Naive thymus-derived CD4-positive, alpha-beta T cell (primary cell): ENCODE measurements at regions of chr7 and their contacts with region 1.

Region 1: DNA sequence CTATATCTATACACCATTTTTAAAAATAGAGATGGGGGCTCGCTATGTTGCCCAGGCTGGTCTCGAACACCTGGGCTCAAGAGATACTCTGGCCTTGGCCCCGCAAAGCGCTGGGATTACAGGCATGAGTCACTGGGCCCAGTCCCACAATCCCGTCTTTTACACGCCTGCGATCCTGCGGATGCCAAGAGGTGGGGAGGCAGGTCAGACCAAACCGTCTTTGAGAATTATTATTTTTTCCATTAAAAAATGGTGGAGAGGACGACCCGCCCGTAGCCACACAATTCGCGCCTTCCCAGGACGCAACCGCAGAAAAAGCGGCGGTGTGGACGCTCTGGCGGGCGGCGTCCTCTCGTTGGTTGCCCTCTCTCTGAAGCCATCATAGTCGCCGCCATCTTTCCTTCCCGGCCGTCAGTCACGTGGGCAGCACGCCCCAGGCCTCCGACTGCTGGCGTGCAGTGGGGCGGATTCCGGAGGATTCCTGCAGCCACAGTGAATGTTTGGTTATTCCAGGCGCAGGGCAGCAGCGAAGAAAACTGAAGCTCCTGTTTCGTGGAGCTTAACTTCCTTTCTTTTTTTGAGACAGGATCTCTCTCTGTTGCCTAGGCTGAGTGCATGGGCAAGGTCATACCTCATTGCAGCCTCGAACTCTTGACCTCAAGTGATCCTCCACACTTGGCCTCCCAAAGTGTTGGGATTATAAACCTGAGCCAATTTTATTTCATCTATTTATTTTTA is 9.9 kb upstream of the EPHB4 start:
- DNase-seq: peak; percentile 42 to 65 (median 59)
- ATAC-seq: peak; percentile 97
- H3K4me3 ChIP-seq: peak overlapping the region; percentile 57
- H3K4me3 Mint-ChIP-seq: peak overlapping the region; percentile 80 to 90 (median 86)
- H3K27ac ChIP-seq: peak overlapping the region; percentile 59
- H3K27ac Mint-ChIP-seq: peak overlapping the region; percentile 64 to 92 (median 77)
- H3K4me1 ChIP-seq: no peaks in the 10 kb centered on the region
- H3K4me1 Mint-ChIP-seq: peaks cover 5 to 19% (median 16%) of the 10 kb centered on the region in 7 donors
- H3K27me3 ChIP-seq: no peaks in the 10 kb centered on the region
- H3K27me3 Mint-ChIP-seq: no peaks in the 10 kb centered on the region

Region 2: GRCh38 chr7:99551767-99552463 is 1285.4 kb before region 1 on chr7 and contains the start of gene FAM200A:
- CTCF ChIA-PET with region 1: no interaction called
- POLR2A ChIA-PET with region 1: no interaction called
- intact Hi-C with region 1: loop called in 1 of 2 experiments (anchors 5 kb)
- DNase-seq: peak; percentile 62 to 88 (median 83)
- ATAC-seq: peak; percentile 99
- H3K4me3 ChIP-seq: peak within 1 kb of the TSS; percentile 93
- H3K4me3 Mint-ChIP-seq: peak within 1 kb of the TSS; percentile 85 to 95 (median 90)
- H3K27ac ChIP-seq: peak within 1 kb of the TSS; percentile 95
- H3K27ac Mint-ChIP-seq: peak within 1 kb of the TSS; percentile 73 to 98 (median 95)
- H3K4me1 ChIP-seq: peaks cover 17 to 23% of the 10 kb centered on the region in 2 donors
- H3K4me1 Mint-ChIP-seq: peaks cover 23 to 62% (median 48%) of the 10 kb centered on the region in 7 donors
- H3K27me3 ChIP-seq: no peaks in the 10 kb centered on the region
- H3K27me3 Mint-ChIP-seq: no peaks in the 10 kb centered on the region
- total RNA-seq, gene FAM200A: 1.9 to 13.6 (median 5.0) TPM

Region 3: DNA sequence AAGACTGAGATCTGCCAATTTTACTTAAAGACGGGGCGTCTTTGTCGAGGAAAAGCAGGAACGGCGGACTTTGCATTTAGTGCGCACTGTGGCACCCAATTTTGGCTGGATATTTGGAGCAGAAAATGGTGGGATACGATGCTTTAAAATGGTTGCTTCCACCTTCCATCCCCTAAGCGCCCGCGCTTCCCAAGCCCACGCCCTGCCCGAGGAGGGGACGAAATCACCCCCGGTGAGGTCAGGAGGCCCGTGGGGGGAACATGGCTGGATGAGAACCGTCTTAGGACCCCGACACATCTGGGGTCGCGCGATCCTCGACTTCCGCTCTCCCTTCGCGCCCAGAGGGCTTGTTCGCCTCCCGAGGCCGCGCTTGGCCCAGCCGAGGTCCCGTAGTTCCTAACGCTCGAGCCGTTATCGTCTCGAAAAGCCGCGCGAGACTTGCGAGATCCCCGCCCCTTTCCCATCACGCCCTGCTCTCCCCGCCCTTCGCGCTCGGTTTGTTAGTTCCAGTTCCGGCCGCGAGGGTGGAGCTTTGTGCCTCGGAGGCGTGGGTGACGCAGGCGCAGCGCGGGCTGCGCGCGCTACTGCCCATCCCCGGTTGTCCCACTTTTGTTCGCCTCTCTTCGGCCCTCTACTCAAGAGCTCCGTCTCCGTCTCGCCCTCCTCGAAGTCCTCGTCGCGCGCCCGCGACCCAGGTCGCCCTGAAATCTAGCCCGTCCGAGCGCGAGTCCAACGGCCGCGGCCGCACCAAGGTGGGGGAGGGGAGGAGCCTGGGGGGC is 37.5 kb after region 1 on chr7 and contains the start of gene SRRT:
- CTCF ChIA-PET with region 1: no interaction called
- POLR2A ChIA-PET with region 1: interaction called, 3 read pairs
- intact Hi-C with region 1: loop called (anchors 1 kb)
- DNase-seq: peak; percentile 92 to 99 (median 97)
- ATAC-seq: peak; percentile 98
- H3K4me3 ChIP-seq: peak within 1 kb of the TSS; percentile 78
- H3K4me3 Mint-ChIP-seq: peak within 1 kb of the TSS; percentile 96 to 100 (median 98)
- H3K27ac ChIP-seq: peak within 1 kb of the TSS; percentile 94
- H3K27ac Mint-ChIP-seq: peak within 1 kb of the TSS; percentile 97 to 99 (median 98)
- H3K4me1 ChIP-seq: peaks cover 22 to 30% of the 10 kb centered on the region in 2 donors
- H3K4me1 Mint-ChIP-seq: peaks cover 27 to 55% (median 52%) of the 10 kb centered on the region in 7 donors
- H3K27me3 ChIP-seq: no peaks in the 10 kb centered on the region
- H3K27me3 Mint-ChIP-seq: no peaks in the 10 kb centered on the region
- total RNA-seq, gene SRRT: 212 to 271 (median 261) TPM

Region 4: GRCh38 chr7:100911467-100911866 is 74.2 kb after region 1 on chr7:
- CTCF ChIA-PET with region 1: no interaction called
- POLR2A ChIA-PET with region 1: no interaction called
- intact Hi-C with region 1: no loop called
- DNase-seq: no peak
- ATAC-seq: no peak
- H3K4me3 ChIP-seq: no peak overlapping the region
- H3K4me3 Mint-ChIP-seq: no peak overlapping the region
- H3K27ac ChIP-seq: no peak overlapping the region
- H3K27ac Mint-ChIP-seq: no peak overlapping the region
- H3K4me1 ChIP-seq: no peaks in the 10 kb centered on the region
- H3K4me1 Mint-ChIP-seq: peaks cover 0 to 3% (median 0%) of the 10 kb centered on the region in 7 donors
- H3K27me3 ChIP-seq: no peaks in the 10 kb centered on the region
- H3K27me3 Mint-ChIP-seq: peaks cover 0 to 21% (median 9%) of the 10 kb centered on the region in 5 donors

Region 5: DNA sequence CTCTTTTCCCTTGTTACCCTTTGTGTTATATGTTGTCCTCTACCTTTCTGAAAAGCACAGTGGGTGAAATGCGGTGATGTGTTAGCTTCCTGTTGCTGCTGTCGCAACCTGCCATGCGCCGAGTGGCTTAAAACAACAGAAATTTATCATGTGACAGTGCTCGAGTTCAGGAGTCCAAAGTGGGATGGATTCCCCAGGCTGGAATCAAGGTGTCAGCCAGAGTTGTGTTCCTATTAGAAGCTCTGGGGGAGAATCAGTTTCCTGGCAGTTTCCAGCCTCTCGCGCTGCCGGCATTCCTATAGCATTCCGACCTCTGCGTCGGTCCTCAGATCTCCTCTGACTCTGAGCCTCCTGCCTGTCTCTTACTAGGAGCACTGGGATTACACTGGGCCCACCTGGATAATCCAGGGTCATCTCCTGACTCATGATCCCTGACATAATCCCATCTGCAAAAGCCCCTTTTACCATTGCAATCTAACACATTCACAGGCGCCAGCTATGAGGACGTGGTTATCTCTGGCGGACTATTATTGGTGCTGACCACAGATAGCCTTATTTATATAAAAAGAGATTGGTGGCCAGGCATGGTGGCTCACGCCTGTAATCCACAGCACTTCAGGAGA is 1187.6 kb after region 1 on chr7:
- CTCF ChIA-PET with region 1: no interaction called
- POLR2A ChIA-PET with region 1: no interaction called
- intact Hi-C with region 1: no loop called
- DNase-seq: no peak
- ATAC-seq: no peak
- H3K4me3 ChIP-seq: no peak overlapping the region
- H3K4me3 Mint-ChIP-seq: no peak overlapping the region
- H3K27ac ChIP-seq: no peak overlapping the region
- H3K27ac Mint-ChIP-seq: peak overlapping the region in 2 of 9 donors; percentile 43 to 79
- H3K4me1 ChIP-seq: peaks cover 0 to 4% of the 10 kb centered on the region in 2 donors
- H3K4me1 Mint-ChIP-seq: peaks cover 0 to 30% (median 17%) of the 10 kb centered on the region in 7 donors
- H3K27me3 ChIP-seq: no peaks in the 10 kb centered on the region
- H3K27me3 Mint-ChIP-seq: no peaks in the 10 kb centered on the region